ENCODE measurements at regions of chr6 and their contacts with region 1.

Region 1: DNA sequence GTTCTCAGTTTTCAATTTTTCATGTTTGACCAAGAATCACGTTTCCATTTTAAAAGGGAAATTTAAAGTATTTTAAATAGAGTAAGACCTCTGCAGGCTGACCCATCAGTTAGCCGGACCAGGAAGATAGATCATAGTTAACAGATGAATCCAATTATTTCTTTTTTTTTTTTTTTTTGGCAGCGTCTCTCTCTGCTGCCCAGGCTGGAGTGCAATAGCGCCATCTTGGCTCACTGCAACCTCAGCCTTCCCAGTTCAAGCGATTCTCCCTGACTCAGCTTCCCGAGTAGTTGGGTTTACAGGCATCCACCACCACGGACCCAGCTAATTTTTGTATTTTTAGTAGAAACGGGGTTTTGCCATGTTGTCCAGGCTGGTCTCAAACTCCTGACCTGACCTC is 256.7 kb upstream of the CNR1 start:
- DNase-seq: peak in 1 of 4 experiments; percentile 33
- ATAC-seq: peak; percentile 66
- H3K4me3 ChIP-seq: no peak overlapping the region
- H3K27ac ChIP-seq: no peak overlapping the region
- H3K4me1 ChIP-seq: peaks cover 0 to 3% of the 10 kb centered on the region in 2 experiments; a peak in 3 of 5 replicates
- H3K27me3 ChIP-seq: no peaks in the 10 kb centered on the region
- CTCF ChIP-seq: peak; percentile 37 to 50 (median 38); a peak in 5 of 6 replicates
- EP300 ChIP-seq: no peak
- POLR2A ChIP-seq: no peak
- RAD21 ChIP-seq: no peak

Region 2: DNA sequence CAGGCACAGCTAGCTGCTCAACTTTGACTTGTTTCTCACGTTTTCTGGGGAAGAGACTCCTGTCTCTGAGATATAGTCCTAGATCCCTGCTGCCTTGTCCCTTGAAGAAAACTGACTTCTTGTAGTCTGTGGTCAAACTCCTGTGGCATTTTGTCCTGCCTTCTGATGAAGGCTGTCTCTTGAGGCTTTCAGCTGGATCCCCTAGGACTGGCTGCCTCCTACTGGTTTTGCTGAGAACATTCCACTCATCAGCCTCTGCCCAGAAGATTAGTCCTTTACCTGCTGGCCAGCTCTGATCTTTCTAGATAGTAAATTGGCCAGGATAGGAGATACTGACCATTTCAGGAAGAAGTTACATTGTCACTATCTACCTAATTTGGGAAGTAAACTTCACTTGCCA is 184.8 kb before region 1 on chr6:
- CTCF ChIA-PET with region 1: no interaction called
- POLR2A ChIA-PET with region 1: no interaction called
- in situ Hi-C with region 1: no loop called
- intact Hi-C with region 1: no loop called
- DNase-seq: peak in 2 of 4 experiments; percentile 8 to 19
- ATAC-seq: peak; percentile 65; the same call in 2 of the 3 replicates
- H3K4me3 ChIP-seq: no peak overlapping the region
- H3K27ac ChIP-seq: no peak overlapping the region
- H3K4me1 ChIP-seq: no peaks in the 10 kb centered on the region
- H3K27me3 ChIP-seq: no peaks in the 10 kb centered on the region
- CTCF ChIP-seq: peak; percentile 9 to 48 (median 39); a peak in 4 of 6 replicates
- EP300 ChIP-seq: no peak
- POLR2A ChIP-seq: no peak
- RAD21 ChIP-seq: peak; percentile 45 to 58

Region 3: DNA sequence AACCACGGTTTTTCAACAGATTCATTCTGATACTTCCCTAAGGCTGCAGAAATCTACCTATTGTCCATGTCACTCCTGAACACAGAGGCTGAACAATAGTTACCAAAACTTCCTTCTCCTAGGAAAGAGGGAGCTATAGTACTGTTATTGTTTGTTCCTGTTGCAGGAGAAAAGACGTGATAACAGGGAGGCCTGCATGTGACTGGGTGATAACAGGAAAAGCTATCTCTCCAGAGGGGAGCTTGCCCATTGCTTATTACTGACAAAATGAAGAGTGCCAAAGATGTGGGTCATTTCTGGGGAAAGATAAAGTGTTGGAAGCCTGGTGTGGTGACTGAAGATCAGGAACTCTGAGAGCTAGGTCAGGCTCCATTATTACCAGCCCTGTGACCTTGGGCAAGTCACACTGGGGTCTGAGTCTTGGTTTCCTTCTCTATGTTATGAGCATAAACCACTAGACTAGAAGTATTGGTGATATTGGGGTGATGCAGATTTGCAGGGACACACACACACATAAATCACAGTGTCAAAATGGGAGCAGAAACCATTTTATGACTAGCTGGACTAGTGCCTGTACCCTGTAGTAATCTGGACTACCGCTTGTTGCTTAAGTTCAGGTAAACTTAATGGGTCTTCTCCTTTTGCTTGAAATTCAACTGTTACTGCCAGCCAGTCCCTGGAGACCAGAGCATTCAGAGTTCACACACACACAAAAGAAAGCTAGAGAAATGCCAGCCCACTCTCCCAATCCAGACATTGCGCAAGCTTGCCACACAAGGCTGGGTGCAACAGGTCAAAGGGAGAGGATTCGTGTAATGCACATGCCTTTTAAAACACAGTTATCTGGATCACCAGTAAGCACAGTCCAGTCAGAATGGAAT is 120.7 kb before region 1 on chr6:
- CTCF ChIA-PET with region 1: no interaction called
- POLR2A ChIA-PET with region 1: no interaction called
- in situ Hi-C with region 1: no loop called
- intact Hi-C with region 1: loop called (anchors 1 kb)
- DNase-seq: peak in 3 of 4 experiments; percentile 11 to 73 (median 63)
- ATAC-seq: peak; percentile 81
- H3K4me3 ChIP-seq: no peak overlapping the region
- H3K27ac ChIP-seq: peak overlapping the region; percentile 10; the same call in 1 of the 3 replicates
- H3K4me1 ChIP-seq: peaks cover 0 to 24% of the 10 kb centered on the region in 2 experiments; a peak in 4 of 5 replicates
- H3K27me3 ChIP-seq: no peaks in the 10 kb centered on the region; a peak in 1 of 5 replicates
- CTCF ChIP-seq: peak in 1 of 3 experiments; percentile 39; a peak in 2 of 6 replicates
- EP300 ChIP-seq: peak; percentile 79
- POLR2A ChIP-seq: no peak
- RAD21 ChIP-seq: peak; percentile 23 to 58

Region 4: GRCh38 chr6:88380083-88380482 is 42.7 kb before region 1 on chr6:
- CTCF ChIA-PET with region 1: no interaction called
- POLR2A ChIA-PET with region 1: no interaction called
- in situ Hi-C with region 1: no loop called
- intact Hi-C with region 1: no loop called
- DNase-seq: no peak
- ATAC-seq: no peak
- H3K4me3 ChIP-seq: no peak overlapping the region
- H3K27ac ChIP-seq: no peak overlapping the region
- H3K4me1 ChIP-seq: peaks cover 0 to 19% of the 10 kb centered on the region in 2 experiments; a peak in 3 of 5 replicates
- H3K27me3 ChIP-seq: no peaks in the 10 kb centered on the region
- CTCF ChIP-seq: no peak
- EP300 ChIP-seq: no peak
- POLR2A ChIP-seq: no peak
- RAD21 ChIP-seq: no peak